Activated CD4-positive, alpha-beta T cell treated with anti-CD3 and anti-CD28 coated beads for 36 hours (primary cell): ENCODE measurements at regions of chr1 and their contacts with region 1.

Region 1: DNA sequence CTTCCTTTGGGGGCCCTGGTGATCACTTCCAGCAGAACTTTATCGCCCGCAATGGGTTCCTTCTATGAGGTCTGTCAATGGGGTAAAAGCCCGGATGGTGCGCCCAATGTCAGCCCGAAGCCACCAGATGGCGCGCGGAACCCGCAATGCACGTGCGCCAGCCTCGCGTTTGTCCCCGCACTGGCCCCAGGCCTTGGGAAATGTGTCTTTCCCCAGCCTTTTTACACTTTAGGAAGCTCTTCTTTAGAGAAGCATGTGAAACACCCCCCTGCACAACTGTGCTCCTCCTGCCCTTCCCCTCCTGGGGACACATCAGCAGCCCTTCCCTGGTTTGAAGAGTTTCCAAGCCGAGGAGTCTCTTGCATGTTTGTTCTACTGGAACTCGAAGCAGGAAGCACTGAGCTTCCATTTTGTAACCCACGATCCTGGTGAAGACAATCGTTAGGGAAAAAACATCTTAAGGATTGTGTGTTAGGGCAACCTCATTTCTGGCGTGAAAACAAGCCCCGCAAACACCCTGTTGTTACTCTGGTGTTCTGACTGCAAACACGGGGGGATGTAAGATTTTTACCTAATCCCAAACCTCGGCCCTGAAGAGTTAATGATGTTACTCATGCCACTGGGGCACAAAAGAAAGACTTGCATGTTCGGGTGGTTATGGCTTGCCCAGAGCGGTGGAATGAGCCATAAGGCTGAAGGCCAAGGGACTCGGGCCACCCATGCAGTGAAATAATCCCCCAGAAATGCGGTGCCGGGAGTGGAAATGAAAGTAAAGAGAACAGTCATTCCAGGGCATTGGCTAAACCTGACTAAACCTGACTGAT is 20.4 kb upstream of the TARBP1 start:
- DNase-seq: peak; percentile 93
- ATAC-seq: peak; percentile 54
- H3K4me3 Mint-ChIP-seq: no peak overlapping the region
- H3K27ac Mint-ChIP-seq: peak overlapping the region; percentile 80
- H3K4me1 Mint-ChIP-seq: peaks cover 76% of the 10 kb centered on the region
- H3K27me3 Mint-ChIP-seq: peaks cover 3% of the 10 kb centered on the region

Region 2: GRCh38 chr1:234544087-234544579 is 44.8 kb after region 1 on chr1:
- CTCF ChIA-PET with region 1: interaction called, 5 read pairs
- POLR2A ChIA-PET with region 1: no interaction called
- intact Hi-C with region 1: loop called in 1 of 2 experiments (anchors 5 kb)
- DNase-seq: peak; percentile 79
- ATAC-seq: peak; percentile 87
- H3K4me3 Mint-ChIP-seq: no peak overlapping the region
- H3K27ac Mint-ChIP-seq: peak overlapping the region; percentile 61
- H3K4me1 Mint-ChIP-seq: peaks cover 23% of the 10 kb centered on the region
- H3K27me3 Mint-ChIP-seq: no peaks in the 10 kb centered on the region

Region 3: GRCh38 chr1:234730770-234731568 is 231.6 kb after region 1 on chr1:
- CTCF ChIA-PET with region 1: interaction called, 4 read pairs
- POLR2A ChIA-PET with region 1: no interaction called
- intact Hi-C with region 1: loop called (anchors 1 to 2 kb)
- DNase-seq: peak; percentile 77
- ATAC-seq: peak; percentile 87
- H3K4me3 Mint-ChIP-seq: peak overlapping the region; percentile 32
- H3K27ac Mint-ChIP-seq: peak overlapping the region; percentile 92
- H3K4me1 Mint-ChIP-seq: peaks cover 71% of the 10 kb centered on the region
- H3K27me3 Mint-ChIP-seq: no peaks in the 10 kb centered on the region

Region 4: DNA sequence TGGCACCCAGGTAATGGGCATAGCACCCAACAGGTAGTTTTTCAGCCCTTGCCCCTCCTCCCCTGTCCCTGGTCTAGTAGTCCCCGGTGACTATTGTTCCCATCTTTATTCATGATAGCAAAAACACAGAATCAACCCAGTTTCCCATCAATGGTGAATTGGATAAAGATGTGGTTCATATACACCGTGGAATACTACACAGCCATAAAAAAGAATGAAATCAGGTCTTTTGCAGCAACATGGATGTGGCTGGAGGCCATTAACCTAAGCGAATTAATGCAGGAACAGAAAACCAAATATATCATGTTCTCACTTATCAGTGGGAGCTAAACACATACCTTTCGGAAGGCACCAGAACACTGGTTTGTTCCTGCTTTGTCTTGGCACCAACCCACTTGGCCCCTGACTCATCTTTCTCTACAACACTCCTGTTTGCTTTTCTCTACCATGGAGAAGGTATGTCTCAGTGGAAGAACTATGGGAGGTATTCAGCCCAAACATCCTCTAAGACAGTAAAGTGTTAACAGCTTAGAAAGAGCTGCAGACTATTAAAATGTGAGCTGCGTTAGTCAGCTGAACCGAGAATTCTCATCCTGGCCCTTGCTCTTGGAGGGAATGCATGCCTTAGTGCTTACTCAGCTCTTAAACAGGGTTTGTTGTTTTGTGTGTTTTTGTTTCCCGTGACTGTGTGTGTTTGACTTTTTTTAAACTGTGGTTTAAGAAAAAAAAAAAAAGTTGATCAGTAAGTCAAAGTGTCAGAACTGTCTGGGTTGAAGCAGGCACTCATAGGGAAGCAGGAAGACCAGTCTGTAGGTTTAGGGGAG is 426.3 kb after region 1 on chr1:
- CTCF ChIA-PET with region 1: interaction called, 5 read pairs
- POLR2A ChIA-PET with region 1: no interaction called
- intact Hi-C with region 1: loop called in 1 of 2 experiments (anchors 1 kb)
- DNase-seq: no peak
- ATAC-seq: peak; percentile 27
- H3K4me3 Mint-ChIP-seq: peak overlapping the region; percentile 59
- H3K27ac Mint-ChIP-seq: peak overlapping the region; percentile 86
- H3K4me1 Mint-ChIP-seq: peaks cover 53% of the 10 kb centered on the region
- H3K27me3 Mint-ChIP-seq: no peaks in the 10 kb centered on the region

Region 5: GRCh38 chr1:235075188-235075926 is 576.0 kb after region 1 on chr1:
- CTCF ChIA-PET with region 1: interaction called, 7 read pairs
- POLR2A ChIA-PET with region 1: no interaction called
- intact Hi-C with region 1: loop called (anchors 1 kb)
- DNase-seq: peak; percentile 86
- ATAC-seq: peak; percentile 64
- H3K4me3 Mint-ChIP-seq: peak overlapping the region; percentile 41
- H3K27ac Mint-ChIP-seq: peak overlapping the region; percentile 98
- H3K4me1 Mint-ChIP-seq: peaks cover 28% of the 10 kb centered on the region
- H3K27me3 Mint-ChIP-seq: no peaks in the 10 kb centered on the region